Activated CD8-positive, alpha-beta T cell treated with anti-CD3 and anti-CD28 coated beads for 36 hours (primary cell): ENCODE measurements at regions of chr4 and their contacts with region 1.

Region 1: GRCh38 chr4:82268050-82268825 is 105.6 kb downstream of the HNRNPD start:
- DNase-seq: peak; percentile 63
- ATAC-seq: peak; percentile 86
- H3K4me3 Mint-ChIP-seq: no peak overlapping the region
- H3K27ac Mint-ChIP-seq: no peak overlapping the region
- H3K4me1 Mint-ChIP-seq: peaks cover 10% of the 10 kb centered on the region
- H3K27me3 Mint-ChIP-seq: no peaks in the 10 kb centered on the region
- CTCF ChIP-seq: peak; percentile 79

Region 2: GRCh38 chr4:82201805-82202641 is 66.2 kb before region 1 on chr4:
- CTCF ChIA-PET with region 1: interaction called, 13 read pairs
- POLR2A ChIA-PET with region 1: no interaction called
- intact Hi-C with region 1: no loop called
- DNase-seq: peak; percentile 82
- ATAC-seq: peak; percentile 55
- H3K4me3 Mint-ChIP-seq: no peak overlapping the region
- H3K27ac Mint-ChIP-seq: no peak overlapping the region
- H3K4me1 Mint-ChIP-seq: no peaks in the 10 kb centered on the region
- H3K27me3 Mint-ChIP-seq: peaks cover 2% of the 10 kb centered on the region
- CTCF ChIP-seq: peak; percentile 77

Region 3: GRCh38 chr4:82282875-82283274 is 14.6 kb after region 1 on chr4:
- CTCF ChIA-PET with region 1: interaction called, 12 read pairs
- POLR2A ChIA-PET with region 1: interaction called, 3 read pairs
- intact Hi-C with region 1: no loop called
- DNase-seq: no peak
- ATAC-seq: no peak
- H3K4me3 Mint-ChIP-seq: no peak overlapping the region
- H3K27ac Mint-ChIP-seq: no peak overlapping the region
- H3K4me1 Mint-ChIP-seq: peaks cover 12% of the 10 kb centered on the region
- H3K27me3 Mint-ChIP-seq: no peaks in the 10 kb centered on the region
- CTCF ChIP-seq: no peak

Region 4: GRCh38 chr4:82638479-82638878 is 370.2 kb after region 1 on chr4:
- CTCF ChIA-PET with region 1: no interaction called
- POLR2A ChIA-PET with region 1: no interaction called
- intact Hi-C with region 1: no loop called
- DNase-seq: peak; percentile 3
- ATAC-seq: no peak
- H3K4me3 Mint-ChIP-seq: no peak overlapping the region
- H3K27ac Mint-ChIP-seq: no peak overlapping the region
- H3K4me1 Mint-ChIP-seq: no peaks in the 10 kb centered on the region
- H3K27me3 Mint-ChIP-seq: no peaks in the 10 kb centered on the region
- CTCF ChIP-seq: no peak